ENCODE measurements at regions of chr14 and their contacts with region 1.

Region 1: DNA sequence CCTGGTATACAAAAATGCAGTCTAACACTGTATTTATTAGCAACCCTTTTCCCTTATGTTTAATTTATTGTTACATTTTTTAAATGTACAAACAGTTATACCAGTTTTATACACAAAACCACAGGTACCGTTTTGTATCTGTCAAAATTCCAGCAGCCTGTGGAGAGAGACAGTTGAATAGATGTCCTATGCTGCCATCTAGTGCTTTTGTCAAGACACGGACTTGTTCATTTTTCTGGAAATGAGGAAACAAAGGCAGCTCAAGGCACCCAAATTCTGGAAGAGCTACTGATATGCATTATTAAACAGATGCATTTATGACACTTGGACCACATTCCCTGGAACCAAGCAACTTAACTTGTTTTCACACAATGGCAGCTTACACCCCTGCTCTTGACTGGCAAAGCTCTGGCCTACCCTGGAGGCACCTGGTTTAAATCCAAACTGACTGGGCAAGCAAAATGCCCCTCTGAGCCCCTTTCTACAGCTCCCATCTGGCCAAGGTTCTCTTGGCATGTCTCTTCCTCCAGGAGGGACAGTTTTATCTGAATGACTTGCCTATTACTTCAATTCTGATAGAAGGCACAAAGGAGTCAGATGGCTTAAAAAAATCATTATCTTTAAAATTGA is 286.9 kb upstream of the PRKD1 start:
- H3K4me3 Mint-ChIP-seq: no peak overlapping the region
- H3K27ac Mint-ChIP-seq: no peak overlapping the region
- H3K4me1 Mint-ChIP-seq: no peaks in the 10 kb centered on the region
- H3K27me3 Mint-ChIP-seq: no peaks in the 10 kb centered on the region

Region 2: GRCh38 chr14:29548948-29549370 is 665.6 kb before region 1 on chr14:
- intact Hi-C with region 1: loop called (anchors 5 kb)
- H3K4me3 Mint-ChIP-seq: no peak overlapping the region
- H3K27ac Mint-ChIP-seq: no peak overlapping the region
- H3K4me1 Mint-ChIP-seq: no peaks in the 10 kb centered on the region
- H3K27me3 Mint-ChIP-seq: no peaks in the 10 kb centered on the region

Region 3: GRCh38 chr14:30177781-30178180 is 36.8 kb before region 1 on chr14:
- intact Hi-C with region 1: no loop called
- H3K4me3 Mint-ChIP-seq: no peak overlapping the region
- H3K27ac Mint-ChIP-seq: no peak overlapping the region
- H3K4me1 Mint-ChIP-seq: no peaks in the 10 kb centered on the region
- H3K27me3 Mint-ChIP-seq: no peaks in the 10 kb centered on the region

Measured in dendritic cell treated with granulocyte-macrophage colony-stimulating factor and Interleukin-4, amounts not matched to agents 40 ng/mL and 50 ng/mL, for 4 days (primary cell).